GM10248 (cell line): ENCODE measurements at regions of chr9 and their contacts with region 1.

Region 1: GRCh38 chr9:124551472-124552272 is 44.5 kb upstream of the NR5A1 start:
- DNase-seq: peak; percentile 44
- CTCF ChIP-seq: peak; percentile 52

Region 2: GRCh38 chr9:124532897-124533296 is 18.8 kb before region 1 on chr9:
- CTCF ChIA-PET with region 1: interaction called, 39 read pairs
- POLR2A ChIA-PET with region 1: no interaction called
- DNase-seq: no peak
- CTCF ChIP-seq: no peak

Region 3: DNA sequence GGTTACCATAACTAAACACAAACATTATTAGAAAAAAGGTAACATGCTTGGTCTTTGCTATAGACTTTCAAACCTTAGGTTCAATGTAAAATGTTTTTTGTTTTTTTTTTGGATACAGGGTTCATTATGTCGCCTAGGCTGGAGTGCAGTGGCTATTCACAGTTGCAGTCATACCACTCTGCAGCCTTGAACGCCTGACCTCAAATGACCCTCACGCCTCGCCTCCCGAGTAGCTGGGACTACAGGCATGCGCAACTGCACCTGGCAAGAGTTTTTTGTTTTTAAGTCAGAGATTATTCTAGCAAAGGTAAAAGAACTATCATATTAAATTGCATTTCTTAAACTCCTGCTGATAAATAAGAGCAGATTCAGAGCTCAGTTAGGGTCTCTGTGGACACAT is 10.7 kb after region 1 on chr9:
- CTCF ChIA-PET with region 1: interaction called, 24 read pairs
- POLR2A ChIA-PET with region 1: no interaction called
- DNase-seq: no peak
- CTCF ChIP-seq: no peak